Cardiac septum (tissue), 1 donor: ENCODE measurements at regions of chr3 and their contacts with region 1.

Region 1: DNA sequence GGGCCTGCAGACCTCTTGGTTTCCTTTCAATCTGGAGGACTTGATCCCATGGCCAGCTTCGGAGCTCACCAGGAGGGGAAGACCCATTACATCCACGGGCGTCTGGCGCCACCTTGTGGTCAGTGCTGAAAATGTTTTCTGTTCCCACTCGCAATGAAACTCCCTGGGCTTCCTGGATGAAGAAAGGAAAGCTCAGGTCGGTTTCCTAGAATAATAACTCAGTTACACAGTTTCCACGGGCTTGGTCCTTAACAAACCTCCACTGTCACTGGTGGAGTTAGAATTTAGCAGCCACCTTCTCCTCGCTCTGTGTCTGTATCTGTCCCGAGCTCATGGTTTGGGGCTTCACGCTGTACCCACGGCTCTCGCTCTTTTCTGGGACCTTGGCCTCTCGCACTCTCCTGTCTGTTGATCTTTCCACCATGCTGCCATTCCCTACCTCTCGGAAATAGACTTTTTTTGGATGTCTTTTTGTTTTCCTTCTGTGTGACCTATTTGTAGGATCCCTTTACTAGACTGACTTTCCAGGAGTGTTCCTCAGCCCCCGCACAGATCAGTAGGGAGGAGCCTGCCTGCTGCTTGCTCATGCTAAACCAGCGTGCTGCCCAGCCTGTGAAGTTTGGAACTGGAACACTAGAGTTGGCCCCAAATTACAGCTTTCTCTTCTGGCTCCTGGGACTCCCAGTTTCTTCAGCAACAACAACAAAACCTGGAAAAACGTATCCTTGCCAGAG is 56.3 kb downstream of the IL20RB start:
- DNase-seq: peak; percentile 94

Region 2: DNA sequence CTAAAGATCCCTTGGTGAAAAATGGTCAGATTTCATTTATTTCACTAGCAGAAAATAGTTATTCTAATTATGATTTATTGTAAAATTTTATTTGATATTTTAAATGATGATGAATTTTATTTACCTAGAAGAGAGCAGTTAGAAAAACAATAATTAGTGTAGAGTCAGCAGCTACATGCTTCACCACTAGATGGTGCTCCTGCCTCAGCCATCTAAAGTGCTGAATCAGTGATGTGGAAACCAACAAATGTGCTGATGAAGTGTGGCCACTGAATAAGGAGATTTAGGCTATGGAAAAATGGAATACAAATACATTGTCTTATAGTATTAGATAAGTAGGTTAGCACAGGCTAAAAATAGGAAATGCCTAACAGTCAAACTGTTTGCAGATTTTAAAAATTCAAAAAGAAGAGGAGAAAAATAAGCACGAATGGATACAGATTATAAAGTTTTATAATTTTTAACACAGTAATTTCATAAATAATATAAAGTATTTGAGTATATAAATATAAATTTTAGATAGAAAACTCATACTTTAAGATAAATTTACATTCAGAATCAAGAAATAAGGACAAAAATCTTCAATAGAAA is 938.8 kb before region 1 on chr3:
- intact Hi-C with region 1: loop called (anchors 5 kb)
- DNase-seq: peak; percentile 81

Region 3: GRCh38 chr3:136250226-136250902 is 763.8 kb before region 1 on chr3 and contains the start of gene PCCB:
- intact Hi-C with region 1: loop called (anchors 5 kb)
- DNase-seq: peak; percentile 97
- total RNA-seq, gene PCCB: 91.3 TPM

Region 4: DNA sequence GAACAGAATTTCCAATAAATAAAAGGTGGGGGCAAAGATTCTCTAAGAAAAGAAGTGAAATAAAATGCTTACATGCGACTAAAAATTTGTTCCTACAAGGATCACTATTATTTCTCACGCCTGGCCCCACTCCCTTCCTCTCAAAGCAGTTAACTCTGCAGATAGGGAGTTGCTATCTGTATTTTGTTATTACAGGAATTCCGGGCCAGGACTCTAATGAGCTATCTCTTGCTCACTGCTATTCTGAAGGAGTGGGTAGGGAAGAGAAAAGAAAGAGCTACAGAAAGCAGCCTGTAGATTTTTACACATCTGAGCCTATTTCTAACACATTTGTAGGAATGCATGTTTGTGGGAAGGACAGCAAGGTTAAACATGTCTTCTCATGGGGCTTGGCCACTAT is 623.5 kb before region 1 on chr3:
- intact Hi-C with region 1: loop called (anchors 2 kb)
- DNase-seq: no peak

Region 5: GRCh38 chr3:136818769-136819391 is 195.2 kb before region 1 on chr3 and contains the start of gene SLC35G2:
- intact Hi-C with region 1: loop called (anchors 2 kb)
- DNase-seq: peak; percentile 82
- total RNA-seq, gene SLC35G2: 4.7 TPM

Region 6: GRCh38 chr3:136949708-136950107 is 64.4 kb before region 1 on chr3:
- intact Hi-C with region 1: loop called (anchors 5 kb)
- DNase-seq: no peak